ENCODE measurements at regions of chr10 and their contacts with region 1.

Region 1: GRCh38 chr10:66321723-66322665 is 603.8 kb upstream of the LRRTM3 start:
- DNase-seq: no peak
- ATAC-seq: peak; percentile 83 to 92 (median 86)
- H3K4me3 ChIP-seq: no peak overlapping the region
- H3K27ac ChIP-seq: peak overlapping the region; percentile 58
- H3K4me1 ChIP-seq: peaks cover 25% of the 10 kb centered on the region
- H3K27me3 ChIP-seq: no peaks in the 10 kb centered on the region
- CTCF ChIP-seq: no peak

Region 2: GRCh38 chr10:65284495-65285041 is 1037.4 kb before region 1 on chr10:
- intact Hi-C with region 1: loop called in 1 of 2 experiments (anchors 5 kb)
- DNase-seq: no peak
- ATAC-seq: no peak
- H3K4me3 ChIP-seq: no peak overlapping the region
- H3K27ac ChIP-seq: no peak overlapping the region
- H3K4me1 ChIP-seq: no peaks in the 10 kb centered on the region
- H3K27me3 ChIP-seq: no peaks in the 10 kb centered on the region
- CTCF ChIP-seq: no peak

Measured in psoas muscle (tissue), 8 donors.